AG04449 (cell line): ENCODE measurements at regions of chr1 and their contacts with region 1.

Region 1: DNA sequence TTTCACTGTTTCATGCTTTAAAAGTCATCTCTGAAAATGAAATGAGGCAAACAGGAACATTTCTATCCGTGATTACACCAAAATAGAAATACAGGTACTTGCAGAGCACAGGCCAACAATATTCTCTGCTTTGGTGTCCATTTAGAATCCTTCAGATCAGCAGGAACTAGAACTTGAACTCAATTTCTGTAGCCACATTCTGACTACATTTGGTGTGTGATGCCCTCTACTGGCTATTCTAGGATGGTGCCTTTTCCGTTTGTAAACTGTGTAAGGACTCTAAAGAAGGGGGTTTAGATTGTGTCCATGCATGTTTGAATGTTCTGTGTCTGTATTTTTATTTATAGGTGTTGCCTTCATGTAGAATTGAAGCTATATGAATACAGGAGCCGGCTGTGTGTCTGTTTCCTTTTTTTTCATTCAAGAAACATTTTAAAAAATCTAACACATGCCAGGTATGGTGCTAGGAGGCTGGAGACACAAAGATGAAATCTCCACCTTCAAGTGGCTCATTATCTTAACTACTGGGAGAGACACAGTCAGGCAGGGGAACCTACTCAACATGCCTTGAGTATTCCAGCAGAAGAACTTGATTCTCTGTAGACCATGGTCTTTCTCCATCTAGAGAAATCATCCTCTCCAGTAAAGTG is 7.6 kb upstream of the ZNF326 start:
- DNase-seq: no peak
- H3K4me3 ChIP-seq: no peak overlapping the region
- CTCF ChIP-seq: peak; percentile 69

Region 2: GRCh38 chr1:89804642-89805237 is 182.6 kb before region 1 on chr1:
- CTCF ChIA-PET with region 1: interaction called, 166 read pairs
- POLR2A ChIA-PET with region 1: no interaction called
- DNase-seq: no peak
- H3K4me3 ChIP-seq: no peak overlapping the region
- CTCF ChIP-seq: peak; percentile 86

Region 3: DNA sequence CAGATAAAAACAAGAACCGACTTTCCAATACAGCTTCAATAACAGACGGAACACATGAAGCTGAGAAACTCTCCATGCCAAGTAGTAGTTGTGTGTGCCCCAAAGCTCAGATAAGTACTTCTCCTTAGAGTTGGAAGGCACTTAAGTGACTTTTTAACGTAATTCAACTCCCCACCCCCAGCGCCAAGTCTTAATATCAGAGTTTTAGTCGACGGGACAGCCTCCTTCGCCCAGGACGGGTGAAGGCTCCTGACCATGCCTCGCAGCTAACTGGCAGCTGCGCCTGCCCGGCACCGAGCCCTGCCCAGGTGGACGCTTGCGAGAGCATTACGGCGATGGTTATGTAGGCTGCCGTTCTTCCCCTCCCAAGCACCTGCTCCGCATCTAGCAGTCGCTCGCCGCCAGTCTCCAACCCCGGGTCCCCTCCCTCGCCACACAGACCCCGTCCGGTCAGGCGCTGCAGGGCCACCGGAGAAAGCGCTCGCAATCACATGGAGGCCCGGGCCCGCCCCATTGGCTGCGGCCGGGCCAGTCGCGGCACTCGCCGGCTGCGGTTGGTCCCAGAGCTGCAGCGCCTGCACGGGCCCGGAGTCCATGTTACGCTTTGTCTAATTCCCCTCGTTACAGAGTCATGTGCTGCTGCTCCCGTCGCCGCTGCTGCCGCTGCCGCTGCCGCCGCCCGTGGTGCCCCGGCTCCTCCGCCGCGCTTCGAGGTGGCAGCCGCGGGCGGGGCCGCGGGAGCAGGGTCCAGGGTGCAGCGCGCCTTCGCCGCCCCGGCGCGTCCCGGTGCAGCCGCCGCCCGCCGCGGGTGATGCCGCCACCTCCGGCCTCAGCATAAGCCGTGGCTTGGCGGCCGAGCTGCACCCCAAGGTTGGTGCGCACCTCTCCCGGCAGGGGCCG is 166.6 kb before region 1 on chr1 and contains the start of gene LRRC8D:
- CTCF ChIA-PET with region 1: interaction called, 10 read pairs
- POLR2A ChIA-PET with region 1: no interaction called
- DNase-seq: no peak
- H3K4me3 ChIP-seq: peak within 1 kb of the TSS; percentile 69
- CTCF ChIP-seq: no peak

Region 4: GRCh38 chr1:89962024-89962741 is 25.1 kb before region 1 on chr1:
- CTCF ChIA-PET with region 1: interaction called, 14 read pairs
- POLR2A ChIA-PET with region 1: no interaction called
- DNase-seq: no peak
- H3K4me3 ChIP-seq: no peak overlapping the region
- CTCF ChIP-seq: no peak

Region 5: DNA sequence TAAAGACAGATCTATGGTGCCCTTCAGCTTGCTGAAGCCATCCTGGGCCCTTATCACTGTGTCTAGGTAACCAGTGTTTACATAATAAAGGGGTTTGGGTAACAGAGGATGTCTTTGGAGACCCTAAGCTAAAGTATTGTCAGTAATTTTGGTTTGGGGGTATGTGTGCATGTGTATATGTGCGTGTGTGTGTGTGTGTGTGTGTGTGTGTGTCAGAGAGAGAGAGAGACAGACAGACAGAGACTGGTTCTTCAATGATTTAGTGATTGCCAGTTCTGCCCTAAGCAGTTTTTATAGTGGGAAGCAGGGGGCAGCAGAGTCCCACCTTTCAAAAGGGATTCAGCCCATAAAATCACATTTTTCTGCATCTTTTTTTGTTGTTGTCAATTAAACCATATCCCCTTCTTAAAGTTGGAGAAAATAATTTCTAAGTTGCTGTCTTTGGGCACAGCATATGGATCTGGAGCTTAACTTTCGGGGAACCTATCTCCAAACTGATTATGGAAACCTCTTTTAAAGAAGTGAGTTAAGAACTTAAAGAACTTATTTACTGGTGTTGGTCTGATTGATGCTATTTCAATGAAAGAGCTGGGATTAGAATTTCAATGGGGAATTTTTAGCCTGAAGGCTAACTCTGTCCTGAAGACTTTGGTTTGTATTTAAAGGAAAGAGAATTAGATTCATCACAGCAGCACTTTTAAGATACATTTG is 58.7 kb after region 1 on chr1:
- CTCF ChIA-PET with region 1: no interaction called
- POLR2A ChIA-PET with region 1: no interaction called
- DNase-seq: no peak
- H3K4me3 ChIP-seq: no peak overlapping the region
- CTCF ChIP-seq: peak; percentile 58